ENCODE measurements at regions of chr2 and their contacts with region 1.

Region 1: DNA sequence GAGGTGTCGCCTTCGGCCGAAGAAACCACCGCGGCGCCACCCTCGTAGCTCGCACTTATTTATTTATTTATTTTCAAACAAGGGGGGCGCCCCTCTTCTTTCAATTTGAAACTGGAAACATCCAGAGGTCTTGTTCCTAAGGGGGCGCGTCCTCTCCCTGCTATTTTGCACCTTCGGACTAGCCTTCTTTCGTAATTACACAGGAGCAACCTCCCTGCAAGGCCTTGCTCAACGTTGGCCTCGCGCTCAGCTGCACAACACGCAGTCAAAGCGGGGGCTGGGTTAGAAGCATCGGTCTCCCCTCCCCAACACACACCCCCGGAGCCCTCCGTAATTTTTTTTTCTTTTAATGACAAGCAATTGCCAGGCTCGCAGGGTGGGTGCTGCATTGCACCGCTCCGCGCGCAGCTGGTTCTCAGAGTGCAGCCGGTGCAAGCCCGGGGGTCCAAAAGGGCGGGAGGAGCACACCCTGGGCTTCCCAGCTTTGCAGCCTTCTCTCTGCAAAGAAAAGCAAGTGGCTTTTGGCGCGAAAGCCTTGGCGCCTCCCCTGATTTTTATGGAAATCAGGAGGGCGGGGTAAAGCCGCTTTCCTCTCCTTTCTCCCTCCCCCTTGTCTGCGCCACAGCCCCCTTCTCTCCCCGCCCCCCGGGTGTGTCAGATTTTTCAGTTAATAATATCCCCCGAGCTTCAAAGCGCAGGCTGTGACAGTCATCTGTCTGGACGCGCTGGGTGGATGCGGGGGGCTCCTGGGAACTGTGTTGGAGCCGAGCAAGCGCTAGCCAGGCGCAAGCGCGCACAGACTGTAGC is at the start of gene MYCN:
- DNase-seq: peak; percentile 89
- H3K4me3 ChIP-seq: peak within 1 kb of the TSS; percentile 53 to 65
- H3K27ac ChIP-seq: peak within 1 kb of the TSS in 1 of 2 experiments; percentile 77; a peak in 2 of 4 replicates
- H3K4me1 ChIP-seq: peaks cover 0 to 31% of the 10 kb centered on the region in 2 experiments; a peak in 2 of 4 replicates
- H3K27me3 ChIP-seq: peaks cover 41% of the 10 kb centered on the region
- CTCF ChIP-seq: peak; percentile 28
- EP300 ChIP-seq: 0 out of 4 replicates have a peak, but pooled peaks of 1 of the 2 experiments have one; percentile 27
- RAD21 ChIP-seq: peak; percentile 90
- polyA plus RNA-seq, gene MYCN: 0.03 TPM in 1 of 2 replicates, not detected in the other

Region 2: GRCh38 chr2:15560988-15561573 is 379.0 kb before region 1 on chr2 and contains the start of gene NBAS:
- CTCF ChIA-PET with region 1: no interaction called
- POLR2A ChIA-PET with region 1: no interaction called
- DNase-seq: peak; percentile 89
- H3K4me3 ChIP-seq: peak within 1 kb of the TSS; percentile 87 to 98
- H3K27ac ChIP-seq: peak within 1 kb of the TSS; percentile 62 to 86; a peak in 3 of 4 replicates
- H3K4me1 ChIP-seq: peaks cover 5 to 15% of the 10 kb centered on the region in 2 experiments; a peak in 2 of 4 replicates
- H3K27me3 ChIP-seq: no peaks in the 10 kb centered on the region
- CTCF ChIP-seq: no peak
- EP300 ChIP-seq: no peak; a peak in 2 of 4 replicates
- RAD21 ChIP-seq: no peak
- polyA plus RNA-seq, gene NBAS: 11.9 and 12.0 TPM in 2 replicates

Region 3: GRCh38 chr2:15636972-15637785 is 302.9 kb before region 1 on chr2:
- CTCF ChIA-PET with region 1: interaction called, 214 read pairs
- POLR2A ChIA-PET with region 1: interaction called, 3 read pairs
- DNase-seq: peak; percentile 87
- H3K4me3 ChIP-seq: no peak overlapping the region; a peak in 1 of 4 replicates
- H3K27ac ChIP-seq: peak overlapping the region in 1 of 2 experiments; percentile 70; a peak in 2 of 4 replicates
- H3K4me1 ChIP-seq: peaks cover 5 to 8% of the 10 kb centered on the region in 2 experiments; a peak in 1 of 4 replicates
- H3K27me3 ChIP-seq: no peaks in the 10 kb centered on the region
- CTCF ChIP-seq: peak; percentile 98
- EP300 ChIP-seq: no peak
- RAD21 ChIP-seq: peak; percentile 100

Region 4: DNA sequence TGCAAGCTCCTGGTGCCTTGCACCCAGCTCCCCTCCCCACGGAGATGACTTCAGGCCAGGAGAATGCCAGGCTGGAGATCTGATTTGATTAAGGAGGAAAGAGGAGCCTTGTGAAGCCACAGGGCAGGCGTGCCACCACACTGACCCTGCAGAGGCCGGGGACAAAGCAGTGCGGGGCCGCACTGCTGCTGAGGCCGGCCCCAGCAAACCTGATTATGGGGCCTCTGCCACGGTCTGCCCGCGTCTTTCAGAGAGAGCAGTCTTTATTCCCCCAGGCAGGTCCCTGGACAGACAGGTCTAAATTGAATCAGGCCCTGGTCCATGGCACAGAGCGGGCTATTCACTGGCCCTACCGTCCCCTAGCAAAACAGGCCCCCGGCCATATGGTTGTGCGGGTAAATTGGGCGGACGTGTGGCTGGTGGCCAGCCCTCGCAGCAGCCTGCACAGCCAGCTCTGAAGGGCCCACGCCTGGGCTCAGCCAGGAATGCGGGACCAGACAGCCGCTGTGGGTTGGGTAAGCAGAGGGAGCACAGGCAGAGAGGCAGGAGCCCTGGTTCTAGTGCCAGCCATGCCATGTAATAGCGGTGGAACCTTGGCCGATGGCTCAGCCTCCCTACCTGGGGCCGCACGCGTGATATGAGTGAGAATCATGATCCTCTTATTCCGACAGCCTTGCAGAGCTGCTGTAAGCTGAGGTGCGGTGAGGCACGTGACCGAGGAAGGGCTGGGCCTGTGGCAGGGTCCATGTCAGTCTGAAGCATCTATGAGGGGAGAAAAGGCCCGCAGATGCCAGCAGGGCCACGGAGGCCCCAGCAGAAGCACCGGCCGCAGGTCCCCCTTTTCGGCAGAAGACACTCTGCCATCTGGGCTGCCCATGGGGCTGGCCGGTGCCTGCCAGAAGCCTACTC is 97.0 kb before region 1 on chr2:
- CTCF ChIA-PET with region 1: interaction called, 15 read pairs
- POLR2A ChIA-PET with region 1: interaction called, 6 read pairs
- DNase-seq: peak; percentile 96
- H3K4me3 ChIP-seq: no peak overlapping the region; a peak in 1 of 4 replicates
- H3K27ac ChIP-seq: peak overlapping the region in 1 of 2 experiments; percentile 100; a peak in 2 of 4 replicates
- H3K4me1 ChIP-seq: peaks cover 0 to 71% of the 10 kb centered on the region in 2 experiments; a peak in 2 of 4 replicates
- H3K27me3 ChIP-seq: no peaks in the 10 kb centered on the region
- CTCF ChIP-seq: no peak
- EP300 ChIP-seq: peak in 1 of 2 experiments; percentile 91; a peak in 2 of 4 replicates
- RAD21 ChIP-seq: peak; percentile 37

Region 5: DNA sequence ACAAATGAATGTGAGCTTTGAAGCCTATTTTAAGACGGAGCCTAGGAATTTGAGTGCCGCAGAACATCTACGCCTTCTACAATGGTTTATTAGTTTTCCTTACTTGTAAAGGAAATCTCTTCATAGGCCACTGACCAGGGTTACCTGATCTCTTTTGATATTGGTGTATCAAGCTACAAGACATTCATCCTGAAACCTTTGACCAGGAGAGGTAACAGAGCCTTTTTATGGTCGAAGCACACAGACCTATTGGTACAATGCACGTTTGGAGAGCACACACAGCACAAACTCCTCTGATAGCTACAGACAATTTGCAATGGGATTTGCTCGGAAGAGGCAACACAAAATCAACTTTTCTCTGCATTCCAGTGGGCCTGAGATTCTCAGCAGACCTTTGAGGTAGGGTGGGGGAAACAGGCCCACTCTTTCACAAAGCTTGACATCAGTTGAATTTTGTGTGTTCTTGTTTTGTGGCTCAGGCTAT is 13.1 kb after region 1 on chr2:
- CTCF ChIA-PET with region 1: interaction called, 22 read pairs
- POLR2A ChIA-PET with region 1: interaction called, 3 read pairs
- DNase-seq: no peak
- H3K4me3 ChIP-seq: no peak overlapping the region
- H3K27ac ChIP-seq: no peak overlapping the region
- H3K4me1 ChIP-seq: peaks cover 0 to 3% of the 10 kb centered on the region in 2 experiments; a peak in 1 of 4 replicates
- H3K27me3 ChIP-seq: no peaks in the 10 kb centered on the region
- CTCF ChIP-seq: no peak
- EP300 ChIP-seq: no peak
- RAD21 ChIP-seq: no peak

Region 6: DNA sequence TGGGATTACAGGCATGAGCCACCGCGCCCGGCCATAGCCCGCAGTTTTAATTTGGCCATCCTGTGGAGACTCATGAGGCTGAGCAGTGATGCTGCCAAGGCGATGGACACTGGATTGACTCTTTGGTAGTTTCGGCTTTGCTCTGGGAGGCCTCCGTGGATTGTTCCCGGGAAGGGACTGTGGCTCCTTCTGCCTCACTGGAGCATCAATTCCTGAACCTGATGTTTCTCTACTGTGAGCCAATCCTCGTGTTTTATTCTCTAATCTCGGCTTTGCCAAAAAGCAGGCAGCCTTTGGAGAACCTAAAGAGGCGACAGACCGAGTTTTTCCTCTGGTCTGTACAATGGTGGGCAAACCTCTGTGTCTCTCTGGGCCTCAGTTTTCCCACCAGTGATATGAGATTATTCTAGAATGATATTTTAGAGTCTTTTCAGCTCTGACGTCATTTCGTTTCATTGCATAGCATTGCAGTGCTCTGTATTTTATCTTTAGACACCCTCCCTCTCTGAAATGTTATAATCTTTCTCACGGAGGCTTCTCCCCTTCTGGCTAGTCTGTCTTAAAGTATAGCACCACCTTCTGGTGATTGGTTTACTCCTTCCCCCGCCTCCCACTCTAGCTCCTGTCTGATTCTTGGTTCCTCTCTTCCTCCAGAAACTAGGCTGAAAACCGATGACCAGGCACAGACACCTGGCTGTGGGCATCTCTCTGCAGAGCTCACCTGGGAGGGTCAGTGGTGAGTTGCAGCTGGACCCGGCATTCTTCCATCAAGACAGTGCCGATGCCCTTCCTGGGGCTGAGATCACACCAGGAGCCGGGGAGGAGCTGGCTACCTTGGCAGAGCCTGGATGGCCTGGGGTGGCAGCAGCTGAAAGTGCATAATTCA is 341.6 kb after region 1 on chr2:
- CTCF ChIA-PET with region 1: interaction called, 93 read pairs
- POLR2A ChIA-PET with region 1: interaction called, 4 read pairs
- DNase-seq: peak; percentile 61
- H3K4me3 ChIP-seq: no peak overlapping the region
- H3K27ac ChIP-seq: no peak overlapping the region
- H3K4me1 ChIP-seq: peaks cover 0 to 18% of the 10 kb centered on the region in 2 experiments; a peak in 1 of 4 replicates
- H3K27me3 ChIP-seq: no peaks in the 10 kb centered on the region
- CTCF ChIP-seq: no peak
- EP300 ChIP-seq: no peak
- RAD21 ChIP-seq: peak; percentile 76

Region 7: GRCh38 chr2:16478434-16479210 is 538.6 kb after region 1 on chr2:
- CTCF ChIA-PET with region 1: interaction called, 29 read pairs
- POLR2A ChIA-PET with region 1: no interaction called
- DNase-seq: no peak
- H3K4me3 ChIP-seq: no peak overlapping the region
- H3K27ac ChIP-seq: no peak overlapping the region
- H3K4me1 ChIP-seq: no peaks in the 10 kb centered on the region
- H3K27me3 ChIP-seq: no peaks in the 10 kb centered on the region
- CTCF ChIP-seq: no peak
- EP300 ChIP-seq: no peak
- RAD21 ChIP-seq: no peak

Region 8: DNA sequence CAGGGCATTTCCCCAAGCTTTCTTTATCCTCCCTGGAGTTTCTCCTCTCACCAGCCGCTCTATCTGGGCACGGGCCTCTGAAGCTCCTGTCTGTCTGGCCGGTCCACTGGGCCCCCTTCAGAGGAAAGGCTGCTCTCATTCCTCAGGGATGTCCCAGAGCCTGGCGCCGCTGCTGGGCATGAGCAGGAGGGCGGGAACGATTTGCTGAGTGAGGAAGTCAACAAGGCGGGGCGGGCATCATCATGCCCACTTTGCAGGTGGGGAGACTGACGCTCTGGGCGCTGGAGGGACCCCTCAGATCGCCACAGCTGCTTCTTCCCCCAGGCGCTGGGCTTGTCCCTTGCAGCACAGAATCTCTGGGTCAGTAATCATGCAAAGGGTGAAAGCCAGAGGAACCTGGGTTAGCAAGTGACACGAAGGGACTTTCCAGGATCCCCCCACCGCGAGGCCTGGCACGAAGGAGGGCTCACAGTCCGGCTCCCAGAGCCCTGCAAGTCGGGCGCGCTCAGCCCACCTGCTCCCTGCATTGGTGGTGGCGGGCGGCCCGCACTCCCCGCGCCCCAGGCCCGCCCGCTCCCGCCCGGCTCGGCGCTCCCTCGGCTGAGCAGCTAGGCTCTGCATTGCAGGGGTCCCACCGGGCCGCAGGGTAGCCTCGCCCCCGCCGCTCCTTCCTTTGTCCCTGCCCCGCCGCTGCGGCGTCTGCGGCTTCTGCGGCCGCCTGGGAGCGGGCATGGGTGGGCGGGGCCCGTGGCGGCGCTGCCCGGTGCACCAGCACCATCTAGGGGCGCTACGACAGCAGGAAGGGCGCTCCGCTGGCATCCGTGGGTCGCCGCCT is 567.8 kb after region 1 on chr2:
- CTCF ChIA-PET with region 1: interaction called, 236 read pairs
- POLR2A ChIA-PET with region 1: interaction called, 9 read pairs
- DNase-seq: peak; percentile 96
- H3K4me3 ChIP-seq: peak overlapping the region in 1 of 2 experiments; percentile 44; a peak in 3 of 4 replicates
- H3K27ac ChIP-seq: no peak overlapping the region; a peak in 1 of 4 replicates
- H3K4me1 ChIP-seq: peaks cover 0 to 23% of the 10 kb centered on the region in 2 experiments; a peak in 1 of 4 replicates
- H3K27me3 ChIP-seq: no peaks in the 10 kb centered on the region
- CTCF ChIP-seq: peak; percentile 35
- EP300 ChIP-seq: no peak
- RAD21 ChIP-seq: peak; percentile 93

Measured in SK-N-SH (cell line).